AG04450 (cell line): ENCODE measurements at regions of chr9 and their contacts with region 1.

Region 1: GRCh38 chr9:76393963-76394679 is at the start of gene RFK:
- DNase-seq: peak; percentile 81
- H3K4me3 ChIP-seq: peak within 1 kb of the TSS; percentile 84
- H3K27ac ChIP-seq: peak within 1 kb of the TSS; percentile 87
- H3K27me3 ChIP-seq: no peaks in the 10 kb centered on the region
- CTCF ChIP-seq: peak; percentile 51
- polyA plus RNA-seq, gene RFK: 20.3 and 29.2 TPM in 2 replicates

Region 2: GRCh38 chr9:75601279-75601678 is 792.8 kb before region 1 on chr9:
- CTCF ChIA-PET with region 1: no interaction called
- POLR2A ChIA-PET with region 1: no interaction called
- DNase-seq: no peak
- H3K4me3 ChIP-seq: no peak overlapping the region
- H3K27ac ChIP-seq: no peak overlapping the region
- H3K27me3 ChIP-seq: no peaks in the 10 kb centered on the region
- CTCF ChIP-seq: no peak

Region 3: DNA sequence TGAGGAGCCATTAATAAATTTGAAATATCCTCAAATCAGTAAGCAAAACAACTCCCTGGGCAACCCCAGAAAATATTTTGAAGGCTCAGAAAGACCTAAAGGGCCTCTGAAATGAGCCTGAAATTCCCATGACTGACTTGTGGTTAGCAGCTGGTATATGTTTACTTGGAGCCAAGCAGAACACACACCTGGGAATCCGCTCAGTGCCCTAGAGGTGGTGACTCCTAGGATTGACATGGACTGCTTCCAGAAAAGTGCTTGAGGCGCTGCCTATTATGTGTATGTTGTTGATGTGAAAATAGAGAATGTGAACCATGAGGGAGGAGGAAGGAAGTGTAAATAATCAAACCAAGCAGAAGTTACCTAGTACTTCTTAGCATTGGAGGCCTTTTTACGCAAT is 14.6 kb before region 1 on chr9:
- CTCF ChIA-PET with region 1: interaction called, 24 read pairs
- POLR2A ChIA-PET with region 1: interaction called, 6 read pairs
- DNase-seq: no peak
- H3K4me3 ChIP-seq: no peak overlapping the region
- H3K27ac ChIP-seq: no peak overlapping the region
- H3K27me3 ChIP-seq: no peaks in the 10 kb centered on the region
- CTCF ChIP-seq: no peak

Region 4: DNA sequence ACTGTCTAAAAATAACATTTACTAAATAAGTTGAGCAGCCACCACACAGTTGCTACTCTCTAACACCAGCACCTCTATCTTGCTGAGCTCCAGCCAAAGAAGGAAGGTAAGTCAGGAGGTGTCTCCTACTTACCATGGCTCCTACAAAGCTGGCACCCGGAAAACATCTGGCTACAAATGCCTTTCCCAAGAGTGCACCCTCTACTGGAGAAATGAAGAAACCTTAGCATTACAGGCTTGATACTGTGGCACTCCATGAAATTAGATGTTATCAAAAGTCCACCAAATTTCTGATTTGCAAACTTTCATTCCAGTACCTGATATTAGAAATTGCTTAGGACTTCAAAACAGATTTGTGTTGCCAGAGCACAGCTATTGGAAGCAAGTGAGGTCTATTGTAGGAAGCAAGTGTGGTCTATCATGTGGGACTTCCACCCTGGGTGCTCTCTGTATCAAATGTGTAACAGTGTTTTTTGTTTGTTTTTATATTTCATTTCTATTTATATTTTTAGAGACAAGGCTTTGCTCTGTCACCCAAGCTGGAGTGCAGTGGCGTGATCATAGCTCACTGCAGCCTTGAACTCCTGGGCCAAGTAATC is 25.8 kb after region 1 on chr9:
- CTCF ChIA-PET with region 1: interaction called, 13 read pairs
- POLR2A ChIA-PET with region 1: no interaction called
- DNase-seq: no peak
- H3K4me3 ChIP-seq: no peak overlapping the region
- H3K27ac ChIP-seq: no peak overlapping the region
- H3K27me3 ChIP-seq: no peaks in the 10 kb centered on the region
- CTCF ChIP-seq: peak; percentile 64

Region 5: GRCh38 chr9:76704593-76705204 is 310.6 kb after region 1 on chr9:
- CTCF ChIA-PET with region 1: interaction called, 27 read pairs
- POLR2A ChIA-PET with region 1: no interaction called
- DNase-seq: peak; percentile 82
- H3K4me3 ChIP-seq: no peak overlapping the region
- H3K27ac ChIP-seq: no peak overlapping the region
- H3K27me3 ChIP-seq: peaks cover 14% of the 10 kb centered on the region
- CTCF ChIP-seq: peak; percentile 68